ENCODE measurements at regions of chr22 and their contacts with region 1.

Region 1: DNA sequence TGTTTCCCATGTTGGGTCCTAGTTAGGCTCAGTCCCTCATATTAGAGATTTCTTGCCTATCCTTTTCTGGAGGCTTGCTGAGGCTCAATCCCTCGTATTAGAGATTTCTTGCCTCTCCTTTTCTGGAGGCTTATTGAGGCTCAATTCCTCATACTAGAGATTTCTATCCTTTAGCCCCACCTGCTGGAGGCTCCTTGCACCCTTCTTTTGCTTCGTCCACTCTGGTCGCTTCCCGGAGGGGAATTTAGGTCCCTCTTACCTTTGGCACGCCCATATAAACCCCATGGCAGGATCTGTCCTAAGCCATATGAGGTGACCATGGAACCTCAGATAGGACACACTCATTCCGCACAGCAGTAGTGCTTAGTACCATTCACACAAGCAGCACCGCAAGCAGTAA is 15.9 kb downstream of the CYP2D6 start:
- DNase-seq: no peak
- ATAC-seq: 0 out of 2 replicates have a peak, but pooled peaks have one; percentile 58
- H3K4me3 ChIP-seq: no peak overlapping the region
- H3K27ac ChIP-seq: no peak overlapping the region
- H3K4me1 ChIP-seq: no peaks in the 10 kb centered on the region
- H3K27me3 ChIP-seq: no peaks in the 10 kb centered on the region
- CTCF ChIP-seq: peak; percentile 17

Region 2: DNA sequence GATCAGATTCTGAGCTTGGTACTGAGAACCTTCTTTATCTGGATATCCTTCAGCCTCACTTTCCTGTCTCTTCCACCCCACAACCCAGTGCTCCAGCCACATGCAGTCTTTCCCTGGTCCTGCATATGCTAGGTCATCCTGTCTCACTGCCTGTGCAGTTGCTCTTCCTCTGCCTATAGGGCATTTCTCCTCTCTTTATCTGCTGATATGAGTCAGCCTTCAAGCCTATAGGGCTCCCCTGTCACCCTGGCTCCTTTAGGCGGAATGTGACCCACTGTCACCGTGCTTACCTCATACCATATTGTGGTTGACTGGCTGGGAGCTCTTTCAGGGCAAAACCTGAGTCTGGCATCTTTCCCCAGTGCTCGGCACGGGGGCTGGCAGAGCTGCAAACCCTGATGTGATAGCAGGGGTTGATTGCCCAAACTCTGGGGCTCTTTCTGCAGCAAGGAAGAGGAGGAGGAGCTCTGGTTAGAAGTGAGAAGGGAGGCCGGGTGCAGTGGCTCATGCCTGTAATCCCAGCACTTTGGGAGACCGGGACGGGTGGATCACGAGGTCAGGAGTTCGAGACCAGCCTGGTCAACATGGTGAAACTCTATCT is 389.1 kb before region 1 on chr22:
- CTCF ChIA-PET with region 1: no interaction called
- POLR2A ChIA-PET with region 1: no interaction called
- in situ Hi-C with region 1: no loop called
- intact Hi-C with region 1: no loop called
- DNase-seq: no peak
- ATAC-seq: peak; percentile 56; the same call in 1 of the 2 replicates
- H3K4me3 ChIP-seq: no peak overlapping the region
- H3K27ac ChIP-seq: no peak overlapping the region
- H3K4me1 ChIP-seq: no peaks in the 10 kb centered on the region
- H3K27me3 ChIP-seq: no peaks in the 10 kb centered on the region
- CTCF ChIP-seq: no peak

Region 3: DNA sequence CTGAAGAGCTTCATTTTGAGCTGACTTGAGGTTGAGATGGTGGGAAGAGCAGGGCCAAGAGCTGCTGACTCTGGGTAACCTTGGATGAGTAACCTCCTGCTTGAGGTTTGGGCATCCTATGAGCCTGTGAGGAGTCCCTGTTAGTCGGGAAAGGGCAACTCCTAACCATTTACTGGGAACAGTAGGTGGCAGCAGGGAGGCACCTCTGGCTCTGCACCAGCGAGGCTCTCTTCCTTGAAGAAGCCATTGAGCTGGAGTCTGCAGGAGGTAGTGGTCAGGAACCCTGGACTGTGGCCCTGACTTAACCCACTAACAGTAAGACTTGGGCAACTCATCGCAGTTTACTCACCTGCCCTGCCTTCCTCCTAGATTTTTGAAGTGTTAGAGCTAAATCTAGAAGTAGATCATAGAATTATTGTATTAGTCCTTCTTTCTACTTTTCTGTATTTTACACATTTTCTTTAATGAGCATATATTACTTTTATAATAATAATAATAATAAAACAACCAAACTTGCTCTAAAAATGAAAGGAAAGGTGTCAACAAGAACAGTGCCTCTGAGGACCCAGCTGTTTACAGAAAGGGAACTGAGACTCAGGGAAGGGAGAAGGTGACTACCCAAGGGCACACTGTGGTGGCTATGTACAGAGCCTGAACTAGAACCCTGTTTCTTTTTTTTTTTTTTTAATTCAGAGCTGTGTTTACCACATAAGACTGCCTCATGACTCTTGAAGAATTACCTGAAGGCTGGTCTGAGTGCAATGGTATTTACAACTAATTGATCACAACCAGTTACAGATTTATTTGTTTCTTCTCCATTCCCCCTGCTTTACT is 367.9 kb before region 1 on chr22:
- CTCF ChIA-PET with region 1: no interaction called
- POLR2A ChIA-PET with region 1: no interaction called
- in situ Hi-C with region 1: no loop called
- intact Hi-C with region 1: no loop called
- DNase-seq: peak; percentile 66
- ATAC-seq: peak; percentile 100
- H3K4me3 ChIP-seq: no peak overlapping the region
- H3K27ac ChIP-seq: no peak overlapping the region
- H3K4me1 ChIP-seq: no peaks in the 10 kb centered on the region
- H3K27me3 ChIP-seq: no peaks in the 10 kb centered on the region
- CTCF ChIP-seq: peak; percentile 84

Region 4: DNA sequence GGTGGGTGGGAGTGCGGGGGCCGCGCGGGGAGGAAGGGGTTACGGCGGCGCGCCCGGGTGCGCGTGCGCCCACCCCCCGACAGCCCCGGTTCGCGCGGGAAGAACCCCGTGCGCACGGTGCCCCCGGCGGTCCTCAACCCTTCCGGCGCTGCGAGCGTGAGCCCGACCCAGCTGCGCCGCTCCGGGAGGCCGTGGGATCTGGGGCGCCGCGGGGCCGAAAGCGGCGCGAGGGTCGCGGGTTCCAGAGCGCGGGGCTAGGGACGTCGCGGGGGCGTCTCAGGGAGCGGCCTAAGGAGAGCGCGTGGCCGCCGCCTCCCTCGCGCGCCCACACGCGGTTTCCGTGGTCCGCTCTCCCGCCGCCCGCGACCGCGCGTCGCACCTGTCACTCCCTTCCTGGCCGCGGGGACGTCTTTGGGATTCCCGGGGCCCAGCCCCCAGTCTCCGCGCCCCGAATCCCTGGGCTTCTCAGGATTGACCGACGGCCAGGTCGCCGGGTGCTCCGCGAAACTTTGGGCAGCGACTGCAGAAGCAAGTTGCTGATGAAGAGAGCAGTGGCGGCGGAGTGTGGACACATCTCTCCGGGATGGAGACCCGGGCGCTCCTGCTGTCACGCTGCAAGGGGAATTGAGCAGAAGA is 281.2 kb before region 1 on chr22:
- CTCF ChIA-PET with region 1: no interaction called
- POLR2A ChIA-PET with region 1: no interaction called
- in situ Hi-C with region 1: no loop called
- intact Hi-C with region 1: no loop called
- DNase-seq: no peak
- ATAC-seq: peak; percentile 20
- H3K4me3 ChIP-seq: peak overlapping the region; percentile 68 to 75
- H3K27ac ChIP-seq: peak overlapping the region; percentile 79
- H3K4me1 ChIP-seq: peaks cover 17% of the 10 kb centered on the region
- H3K27me3 ChIP-seq: no peaks in the 10 kb centered on the region
- CTCF ChIP-seq: no peak

Region 5: DNA sequence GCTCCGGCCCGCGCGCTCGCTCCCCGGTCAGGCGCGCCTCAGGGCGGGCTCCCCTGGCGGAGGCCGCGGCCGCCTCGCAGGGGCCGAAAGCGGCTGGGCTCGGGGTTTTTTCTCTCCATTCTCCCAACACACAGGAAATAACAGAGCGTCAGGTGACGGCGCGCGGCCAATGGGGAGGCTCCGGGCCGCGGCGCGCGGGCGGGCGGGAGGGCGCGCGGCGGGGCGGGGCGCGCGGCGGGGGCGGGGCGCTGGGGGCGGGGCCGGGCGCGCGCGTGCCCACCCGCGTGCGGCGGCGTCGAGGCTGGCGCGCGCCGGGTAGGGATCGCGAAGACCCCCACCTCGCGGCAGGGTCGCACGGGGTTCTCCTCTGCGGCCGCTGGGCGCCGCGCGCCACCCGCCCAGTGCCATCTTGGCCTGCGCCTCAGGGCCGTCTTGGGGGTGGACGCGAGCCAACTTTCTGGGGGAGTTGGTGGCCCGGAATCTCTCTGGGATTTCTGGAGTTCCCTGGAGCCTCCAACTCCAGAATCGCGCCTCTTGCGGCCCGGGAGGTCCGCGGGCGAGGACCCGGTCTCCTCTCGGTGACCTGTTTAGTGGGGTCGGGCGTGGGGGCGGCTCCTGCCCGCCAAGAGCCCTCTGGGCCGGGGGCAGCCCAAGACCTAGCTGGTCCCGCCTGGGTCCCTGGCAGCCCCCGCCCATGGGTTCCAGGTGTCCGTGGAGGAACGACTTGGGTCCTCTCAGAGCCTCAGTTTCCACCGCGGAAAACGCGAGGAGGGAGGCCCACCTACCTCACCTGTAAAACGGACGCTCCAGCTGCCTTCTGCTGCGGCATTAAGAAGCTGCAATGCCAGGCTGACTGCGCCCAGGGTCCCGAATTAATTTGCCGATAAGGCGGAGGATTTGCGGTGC is 156.0 kb after region 1 on chr22 and contains the start of gene TCF20:
- CTCF ChIA-PET with region 1: no interaction called
- POLR2A ChIA-PET with region 1: interaction called, 17 read pairs
- in situ Hi-C with region 1: no loop called
- intact Hi-C with region 1: no loop called
- DNase-seq: no peak
- ATAC-seq: peak; percentile 80
- H3K4me3 ChIP-seq: peak within 1 kb of the TSS; percentile 70 to 72
- H3K27ac ChIP-seq: peak within 1 kb of the TSS; percentile 80
- H3K4me1 ChIP-seq: peaks cover 32% of the 10 kb centered on the region
- H3K27me3 ChIP-seq: no peaks in the 10 kb centered on the region
- CTCF ChIP-seq: no peak
- total RNA-seq, gene TCF20: 79.8 TPM

Measured in Panc1 (cell line).